ENCODE measurements at regions of chr12 and their contacts with region 1.

Region 1: GRCh38 chr12:75722714-75723200 is 211.3 kb upstream of the KRR1 start:
- DNase-seq: no peak
- ATAC-seq: no peak
- H3K4me3 ChIP-seq: no peak overlapping the region
- H3K27ac ChIP-seq: peak overlapping the region; percentile 100
- H3K4me1 ChIP-seq: peaks cover 70% of the 10 kb centered on the region
- H3K27me3 ChIP-seq: no peaks in the 10 kb centered on the region
- CTCF ChIP-seq: no peak

Region 2: GRCh38 chr12:75511116-75512048 is 211.4 kb before region 1 on chr12 and contains the start of gene KRR1:
- CTCF ChIA-PET with region 1: no interaction called
- POLR2A ChIA-PET with region 1: interaction called, 4 read pairs
- in situ Hi-C with region 1: no loop called
- intact Hi-C with region 1: loop called (anchors 5 kb)
- DNase-seq: peak; percentile 93
- ATAC-seq: peak; percentile 97
- H3K4me3 ChIP-seq: peak within 1 kb of the TSS; percentile 84 to 99
- H3K27ac ChIP-seq: peak within 1 kb of the TSS; percentile 100
- H3K4me1 ChIP-seq: peaks cover 38% of the 10 kb centered on the region
- H3K27me3 ChIP-seq: no peaks in the 10 kb centered on the region
- CTCF ChIP-seq: no peak
- total RNA-seq, gene KRR1: 161 TPM

Region 3: GRCh38 chr12:75766263-75767160 is 43.8 kb after region 1 on chr12:
- CTCF ChIA-PET with region 1: interaction called, 3 read pairs
- POLR2A ChIA-PET with region 1: no interaction called
- in situ Hi-C with region 1: no loop called
- intact Hi-C with region 1: loop called (anchors 5 kb)
- DNase-seq: no peak
- ATAC-seq: peak; percentile 95
- H3K4me3 ChIP-seq: no peak overlapping the region
- H3K27ac ChIP-seq: peak overlapping the region; percentile 89
- H3K4me1 ChIP-seq: peaks cover 36% of the 10 kb centered on the region
- H3K27me3 ChIP-seq: no peaks in the 10 kb centered on the region
- CTCF ChIP-seq: no peak

Region 4: GRCh38 chr12:75862692-75863471 is 140.1 kb after region 1 on chr12:
- CTCF ChIA-PET with region 1: no interaction called
- POLR2A ChIA-PET with region 1: no interaction called
- in situ Hi-C with region 1: no loop called
- intact Hi-C with region 1: loop called (anchors 10 kb)
- DNase-seq: peak; percentile 91
- ATAC-seq: peak; percentile 92
- H3K4me3 ChIP-seq: no peak overlapping the region
- H3K27ac ChIP-seq: peak overlapping the region; percentile 97
- H3K4me1 ChIP-seq: peaks cover 27% of the 10 kb centered on the region
- H3K27me3 ChIP-seq: no peaks in the 10 kb centered on the region
- CTCF ChIP-seq: no peak

Region 5: GRCh38 chr12:75977952-75978671 is 255.4 kb after region 1 on chr12:
- CTCF ChIA-PET with region 1: no interaction called
- POLR2A ChIA-PET with region 1: no interaction called
- in situ Hi-C with region 1: no loop called
- intact Hi-C with region 1: loop called (anchors 2 kb)
- DNase-seq: peak; percentile 98
- ATAC-seq: peak; percentile 91
- H3K4me3 ChIP-seq: no peak overlapping the region
- H3K27ac ChIP-seq: peak overlapping the region; percentile 99
- H3K4me1 ChIP-seq: peaks cover 63% of the 10 kb centered on the region
- H3K27me3 ChIP-seq: no peaks in the 10 kb centered on the region
- CTCF ChIP-seq: no peak

Region 6: GRCh38 chr12:76020731-76021672 is 298.2 kb after region 1 on chr12:
- CTCF ChIA-PET with region 1: no interaction called
- POLR2A ChIA-PET with region 1: interaction called, 3 read pairs
- in situ Hi-C with region 1: no loop called
- intact Hi-C with region 1: loop called (anchors 5 kb)
- DNase-seq: no peak
- ATAC-seq: peak; percentile 76
- H3K4me3 ChIP-seq: no peak overlapping the region
- H3K27ac ChIP-seq: peak overlapping the region; percentile 100
- H3K4me1 ChIP-seq: peaks cover 75% of the 10 kb centered on the region
- H3K27me3 ChIP-seq: no peaks in the 10 kb centered on the region
- CTCF ChIP-seq: no peak

Region 7: DNA sequence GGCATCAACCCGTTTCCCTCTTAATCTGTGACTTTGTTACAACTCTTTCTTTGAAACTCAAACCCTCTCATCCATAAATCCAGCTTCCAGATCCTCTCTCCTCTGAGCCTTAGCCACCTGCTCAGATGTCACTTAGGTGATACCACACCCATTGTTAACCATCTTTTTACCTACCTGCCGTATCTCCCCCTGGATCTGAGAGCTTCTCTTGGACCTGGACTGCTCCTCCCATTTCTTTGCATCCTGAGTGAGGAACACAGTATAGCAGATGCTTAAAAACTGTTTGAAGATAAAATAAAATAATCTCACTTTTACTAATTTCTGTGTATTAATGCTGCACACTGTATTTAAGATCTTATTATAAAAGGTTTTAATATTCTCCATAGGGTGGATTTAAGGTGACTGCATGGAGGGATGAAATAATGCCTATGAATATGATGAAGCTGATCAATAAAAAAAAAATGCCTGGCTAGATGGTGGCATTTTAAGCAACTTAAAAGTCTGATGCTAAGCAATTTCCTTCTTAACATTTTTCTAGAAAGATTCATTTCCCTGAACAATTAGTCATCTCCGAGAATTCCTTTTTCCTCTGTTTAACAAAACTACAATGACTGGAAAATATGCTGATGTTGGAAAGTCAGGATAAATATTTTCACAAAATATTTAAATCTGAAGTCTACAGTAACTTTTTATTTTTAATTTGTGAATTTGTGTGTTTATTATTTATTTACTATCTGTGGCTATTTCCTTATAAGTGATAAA is 400.9 kb after region 1 on chr12:
- CTCF ChIA-PET with region 1: no interaction called
- POLR2A ChIA-PET with region 1: no interaction called
- in situ Hi-C with region 1: no loop called
- intact Hi-C with region 1: no loop called
- DNase-seq: no peak
- ATAC-seq: 0 out of 2 replicates have a peak, but pooled peaks have one; percentile 34
- H3K4me3 ChIP-seq: no peak overlapping the region
- H3K27ac ChIP-seq: no peak overlapping the region
- H3K4me1 ChIP-seq: no peaks in the 10 kb centered on the region
- H3K27me3 ChIP-seq: no peaks in the 10 kb centered on the region
- CTCF ChIP-seq: no peak